Gastrocnemius medialis (tissue), 4 donors: ENCODE measurements at regions of chr18 and their contacts with region 1.

Region 1: DNA sequence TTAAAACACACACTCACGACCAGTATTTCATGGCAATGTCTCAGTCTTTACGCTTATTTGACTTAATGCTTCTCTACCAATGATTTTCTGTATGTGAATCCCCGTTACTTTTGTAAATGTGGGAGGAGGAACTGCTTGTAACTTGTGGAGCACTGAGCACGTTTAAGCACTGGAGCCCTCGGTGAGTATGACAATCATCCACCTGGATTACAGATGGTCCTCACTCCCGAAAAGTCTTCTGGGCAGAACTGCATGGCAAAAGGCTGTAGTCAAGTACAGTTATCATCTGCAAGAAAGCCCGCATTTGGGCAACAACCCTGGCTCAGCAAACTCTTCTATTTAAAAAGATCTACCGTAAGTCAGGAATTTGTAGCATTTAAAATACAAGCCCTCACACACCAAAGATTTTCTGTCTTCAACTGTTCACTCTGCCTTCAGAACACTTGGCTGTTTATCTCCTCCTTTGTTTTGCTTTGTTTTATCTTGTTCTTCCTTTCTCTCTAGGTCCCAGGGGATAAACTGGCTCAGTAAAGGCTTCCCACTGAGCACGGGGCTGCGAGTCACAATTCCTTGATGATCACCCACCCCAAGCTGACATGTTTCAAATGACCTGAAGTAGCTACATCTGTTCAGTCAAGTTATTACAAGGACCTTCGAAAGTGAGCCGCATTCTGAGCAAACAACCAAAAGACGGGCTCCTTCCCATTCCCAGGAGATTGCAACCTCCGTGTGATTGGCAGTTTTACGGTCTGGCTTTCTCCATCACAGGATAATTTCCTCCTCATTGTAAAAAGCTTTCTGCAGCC is 102.2 kb downstream of the DLGAP1 start:
- DNase-seq: no peak
- ATAC-seq: no peak
- H3K4me3 ChIP-seq: no peak overlapping the region
- H3K27ac ChIP-seq: no peak overlapping the region
- H3K4me1 ChIP-seq: no peaks in the 10 kb centered on the region
- H3K27me3 ChIP-seq: no peaks in the 10 kb centered on the region
- CTCF ChIP-seq: no peak
- POLR2A ChIP-seq: no peak

Region 2: DNA sequence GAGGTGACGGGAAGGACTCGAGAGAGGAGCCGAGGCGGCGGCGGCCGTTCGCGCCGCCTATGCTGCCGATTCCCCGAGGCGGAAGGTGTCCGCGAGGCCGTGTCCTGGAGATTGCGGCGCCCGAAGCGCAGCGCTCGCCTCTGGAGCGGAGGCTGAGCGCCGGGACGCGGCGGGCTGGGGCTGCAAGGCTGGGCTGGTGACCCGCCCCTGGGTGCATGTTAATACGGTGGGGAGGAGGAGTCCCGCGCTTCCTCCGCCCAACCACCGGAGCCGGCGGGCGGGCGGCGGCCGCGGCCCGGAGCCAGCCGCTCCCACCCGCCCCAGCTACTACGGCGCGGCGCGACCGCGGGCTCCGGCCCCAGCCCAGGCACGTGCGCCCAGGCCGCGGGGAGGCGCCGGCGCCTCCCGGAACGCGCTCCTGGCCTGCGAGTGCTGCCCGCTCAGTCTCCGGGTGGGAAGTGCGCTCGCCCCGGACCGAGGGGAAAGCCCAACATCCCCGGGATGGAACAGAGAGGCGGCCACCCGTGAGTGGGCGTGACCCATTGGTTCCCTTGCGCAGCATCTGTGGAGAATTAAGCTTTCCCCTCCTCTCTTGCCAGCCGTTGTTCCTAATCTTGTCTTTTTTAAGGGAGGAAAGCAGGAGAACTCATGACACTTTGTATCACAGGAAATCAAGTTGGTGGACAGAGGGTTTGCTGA is 102.3 kb after region 1 on chr18 and contains the start of gene DLGAP1:
- in situ Hi-C with region 1: loop called in 1 of 4 experiments (anchors 25 kb)
- intact Hi-C with region 1: no loop called
- DNase-seq: peak; percentile 6 to 11
- ATAC-seq: peak in 1 of 2 donors; percentile 47
- H3K4me3 ChIP-seq: peak within 1 kb of the TSS; percentile 31 to 48 (median 38)
- H3K27ac ChIP-seq: no peak within 1 kb of the TSS
- H3K4me1 ChIP-seq: no peaks in the 10 kb centered on the region
- H3K27me3 ChIP-seq: peaks cover 11 to 31% (median 24%) of the 10 kb centered on the region in 3 donors
- CTCF ChIP-seq: no peak
- POLR2A ChIP-seq: peak in 1 of 2 donors; percentile 28
- total RNA-seq, gene DLGAP1: 0.13 to 6.2 (median 0.53) TPM